ENCODE measurements at regions of chr6 and their contacts with region 1.

Region 1: GRCh38 chr6:131923356-131923755 is 27.8 kb downstream of the CCN2 start:
- DNase-seq: peak; percentile 70
- H3K4me3 Mint-ChIP-seq: no peak overlapping the region
- H3K27ac Mint-ChIP-seq: no peak overlapping the region
- H3K4me1 Mint-ChIP-seq: no peaks in the 10 kb centered on the region
- H3K27me3 Mint-ChIP-seq: peaks cover 8% of the 10 kb centered on the region

Region 2: DNA sequence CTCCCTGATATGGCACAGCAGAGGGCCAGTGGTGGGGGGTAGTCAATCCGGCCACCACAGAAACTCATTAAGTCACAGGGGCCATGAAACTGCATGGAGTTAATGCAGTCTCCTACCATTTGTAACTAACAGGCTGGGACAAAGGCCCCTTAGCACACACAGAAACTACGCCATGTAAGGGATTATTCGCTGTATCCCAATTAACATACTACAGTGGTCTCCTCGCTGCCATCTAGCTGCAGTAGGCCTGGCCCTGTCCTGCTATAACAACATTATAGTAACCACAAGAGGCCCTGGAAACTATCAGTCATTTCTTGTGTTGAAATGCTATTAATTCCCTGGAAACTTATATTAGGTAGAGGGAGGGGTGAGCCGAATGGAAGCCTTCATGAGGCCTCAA is 100.1 kb after region 1 on chr6:
- CTCF ChIA-PET with region 1: no interaction called
- DNase-seq: no peak
- H3K4me3 Mint-ChIP-seq: no peak overlapping the region
- H3K27ac Mint-ChIP-seq: no peak overlapping the region
- H3K4me1 Mint-ChIP-seq: no peaks in the 10 kb centered on the region
- H3K27me3 Mint-ChIP-seq: no peaks in the 10 kb centered on the region

Region 3: GRCh38 chr6:132218059-132218696 is 294.8 kb after region 1 on chr6:
- CTCF ChIA-PET with region 1: interaction called, 13 read pairs
- DNase-seq: no peak
- H3K4me3 Mint-ChIP-seq: no peak overlapping the region
- H3K27ac Mint-ChIP-seq: no peak overlapping the region
- H3K4me1 Mint-ChIP-seq: no peaks in the 10 kb centered on the region
- H3K27me3 Mint-ChIP-seq: no peaks in the 10 kb centered on the region